WTC11 (cell line): ENCODE measurements at regions of chr20 and their contacts with region 1.

Region 1: DNA sequence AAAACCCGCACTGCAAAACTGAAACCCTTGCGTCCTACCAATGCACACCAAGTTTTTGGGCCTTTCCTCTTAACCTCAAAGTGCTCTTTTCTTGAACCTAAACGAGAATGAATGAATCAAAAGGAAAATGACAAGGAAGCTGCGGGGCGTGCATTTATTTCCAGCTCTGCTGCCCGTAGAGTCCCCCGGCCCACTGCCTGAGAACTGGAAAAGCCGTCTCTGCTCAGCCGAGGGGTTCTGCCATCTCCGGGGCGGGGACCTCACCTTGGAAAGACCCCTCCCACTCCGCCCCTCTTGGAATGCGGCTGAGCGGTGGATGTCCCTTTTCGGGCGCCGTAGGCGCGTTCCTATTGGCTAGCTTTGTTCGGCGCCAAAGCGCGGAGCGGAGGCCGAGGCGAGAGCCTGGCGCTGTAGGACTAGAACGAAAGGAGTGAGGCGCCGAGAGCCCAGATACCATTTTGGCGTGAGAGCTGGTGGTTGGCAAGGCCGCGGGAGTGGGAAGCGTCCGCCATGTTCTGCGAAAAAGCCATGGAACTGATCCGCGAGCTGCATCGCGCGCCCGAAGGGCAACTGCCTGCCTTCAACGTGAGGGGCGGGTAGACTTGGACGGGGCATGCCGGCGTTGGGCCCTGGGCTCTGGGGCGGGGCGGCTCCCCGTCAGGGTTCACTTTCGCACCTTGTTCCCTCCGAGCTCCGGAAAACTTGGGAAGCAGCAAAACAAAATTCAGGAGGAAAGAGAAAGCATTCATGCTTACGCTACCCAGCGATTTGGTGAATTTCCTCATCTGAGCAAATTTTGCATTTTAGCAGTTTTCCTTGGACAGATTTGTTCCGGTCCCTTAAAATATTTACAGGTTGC is at the start of gene GINS1:
- DNase-seq: peak; percentile 98
- ATAC-seq: peak; percentile 96
- H3K4me3 Mint-ChIP-seq: peak within 1 kb of the TSS; percentile 92
- H3K27ac Mint-ChIP-seq: peak within 1 kb of the TSS; percentile 94
- H3K4me1 Mint-ChIP-seq: peaks cover 18% of the 10 kb centered on the region
- H3K27me3 Mint-ChIP-seq: peaks cover 9% of the 10 kb centered on the region; the same call in 1 of the 2 replicates
- CTCF ChIP-seq: no peak
- total RNA-seq, gene GINS1: 69.8 to 71.6 TPM (median 70.4 TPM) in 3 replicates

Region 2: GRCh38 chr20:25294459-25295385 is 112.8 kb before region 1 on chr20:
- CTCF ChIA-PET with region 1: interaction called, 20 read pairs
- POLR2A ChIA-PET with region 1: interaction called, 3 read pairs
- DNase-seq: peak; percentile 85
- ATAC-seq: peak; percentile 83
- H3K4me3 Mint-ChIP-seq: no peak overlapping the region
- H3K27ac Mint-ChIP-seq: no peak overlapping the region
- H3K4me1 Mint-ChIP-seq: peaks cover 28% of the 10 kb centered on the region
- H3K27me3 Mint-ChIP-seq: no peaks in the 10 kb centered on the region
- CTCF ChIP-seq: peak; percentile 56

Region 3: GRCh38 chr20:25336561-25337422 is 70.7 kb before region 1 on chr20:
- CTCF ChIA-PET with region 1: interaction called, 10 read pairs
- POLR2A ChIA-PET with region 1: no interaction called
- DNase-seq: peak; percentile 53
- ATAC-seq: peak; percentile 87
- H3K4me3 Mint-ChIP-seq: no peak overlapping the region
- H3K27ac Mint-ChIP-seq: peak overlapping the region; percentile 72
- H3K4me1 Mint-ChIP-seq: peaks cover 32% of the 10 kb centered on the region
- H3K27me3 Mint-ChIP-seq: no peaks in the 10 kb centered on the region
- CTCF ChIP-seq: no peak

Region 4: DNA sequence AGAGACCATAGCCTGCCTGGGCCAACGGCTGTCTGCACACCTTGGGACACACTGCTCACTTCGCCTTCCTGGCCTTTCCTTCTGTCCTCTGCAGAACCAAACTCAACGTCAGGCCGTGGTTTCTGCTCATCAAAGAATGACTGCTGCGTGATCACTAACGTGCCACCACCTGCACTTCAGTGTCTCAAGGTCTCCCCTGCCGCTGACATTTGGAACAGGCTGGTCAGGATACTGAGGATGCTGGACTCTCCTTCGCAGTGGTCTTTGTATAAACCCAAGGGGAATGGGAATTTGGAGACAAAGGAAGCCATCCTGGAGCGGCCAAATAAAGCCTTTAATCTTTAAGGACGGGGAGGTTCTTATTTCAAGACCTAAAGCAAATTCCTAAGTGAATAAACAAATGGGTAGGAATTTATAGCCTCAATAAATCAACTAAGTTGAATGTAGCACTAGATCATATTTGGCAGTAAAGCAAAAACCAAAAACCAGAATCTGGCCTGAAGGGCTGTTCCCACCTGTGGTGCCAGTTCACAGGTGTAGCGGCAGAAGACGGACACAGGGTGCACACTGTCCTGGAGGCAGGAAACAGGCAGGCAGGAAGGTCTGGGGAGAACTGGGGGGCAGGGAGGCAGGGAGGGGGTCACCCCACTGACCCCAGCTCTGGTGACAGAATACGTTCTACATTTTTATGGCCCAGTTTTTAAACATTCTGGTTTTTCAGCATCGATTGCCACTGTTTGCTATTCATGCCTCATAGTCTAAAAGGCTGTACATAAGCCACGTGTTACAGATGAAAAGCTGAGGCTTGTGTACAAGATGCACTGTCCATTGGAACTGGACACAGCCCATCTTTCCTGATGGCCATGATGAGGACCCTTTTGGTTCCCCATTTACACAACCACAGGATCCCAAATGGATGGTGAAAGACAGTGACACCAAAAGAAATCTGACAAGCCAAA is 53.5 kb before region 1 on chr20:
- CTCF ChIA-PET with region 1: no interaction called
- POLR2A ChIA-PET with region 1: no interaction called
- DNase-seq: no peak
- ATAC-seq: no peak
- H3K4me3 Mint-ChIP-seq: peak overlapping the region; percentile 14
- H3K27ac Mint-ChIP-seq: peak overlapping the region; percentile 93
- H3K4me1 Mint-ChIP-seq: peaks cover 73% of the 10 kb centered on the region
- H3K27me3 Mint-ChIP-seq: no peaks in the 10 kb centered on the region
- CTCF ChIP-seq: no peak

Region 5: DNA sequence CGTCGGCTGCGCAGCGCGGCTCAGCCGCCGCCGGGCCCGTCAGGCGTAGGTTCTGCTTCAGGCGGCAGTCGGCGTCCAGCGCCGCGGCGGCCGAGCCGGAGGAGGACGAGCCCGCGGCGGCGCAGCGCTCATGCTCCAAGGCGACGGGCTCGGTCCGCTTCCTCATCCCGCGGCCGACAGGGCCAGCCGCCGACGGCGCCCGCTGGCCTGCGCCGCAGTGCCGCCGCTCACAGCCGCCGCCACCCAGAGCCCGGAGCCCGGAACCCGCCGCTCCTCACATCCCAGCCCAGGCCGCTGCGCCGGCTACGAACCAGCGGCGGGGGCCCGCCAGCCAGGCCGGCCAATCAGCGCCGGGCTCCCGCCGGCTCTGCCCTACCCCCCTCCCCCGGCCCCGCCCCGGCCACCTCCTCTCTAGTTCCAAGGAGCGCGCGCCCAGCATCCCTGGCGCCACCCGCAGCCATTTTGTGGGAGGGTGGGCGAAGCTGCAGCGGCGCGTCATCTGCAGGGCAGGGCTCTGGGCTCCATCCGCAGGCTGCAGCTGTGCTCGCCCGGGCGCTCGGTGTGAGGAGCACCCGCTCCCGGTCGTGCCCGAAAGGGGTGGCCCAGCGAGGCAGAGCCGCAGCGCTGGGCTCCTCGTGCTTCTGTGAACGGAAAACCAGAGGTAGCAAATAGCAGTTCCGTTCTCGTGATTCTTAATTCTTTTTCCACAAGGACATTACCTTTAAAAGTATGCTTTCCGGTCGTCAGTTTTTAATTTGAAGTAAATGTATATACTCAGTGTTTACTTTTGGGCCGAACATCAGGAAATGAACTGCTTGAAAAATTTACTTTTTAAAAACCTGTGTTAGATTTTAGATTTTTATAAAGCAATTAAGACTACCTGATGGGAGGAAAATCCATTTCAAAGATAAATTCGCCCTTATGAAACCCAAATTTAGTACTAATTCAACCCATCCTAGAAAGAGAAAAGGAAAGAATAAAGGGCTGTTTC is 16.7 kb before region 1 on chr20 and contains the start of gene ABHD12:
- CTCF ChIA-PET with region 1: interaction called, 8 read pairs
- POLR2A ChIA-PET with region 1: interaction called, 11 read pairs
- DNase-seq: peak; percentile 97
- ATAC-seq: peak; percentile 93
- H3K4me3 Mint-ChIP-seq: peak within 1 kb of the TSS; percentile 86
- H3K27ac Mint-ChIP-seq: peak within 1 kb of the TSS; percentile 95
- H3K4me1 Mint-ChIP-seq: peaks cover 12% of the 10 kb centered on the region
- H3K27me3 Mint-ChIP-seq: no peaks in the 10 kb centered on the region
- CTCF ChIP-seq: no peak
- total RNA-seq, gene ABHD12: 63.1 to 68.7 TPM (median 68.2 TPM) in 3 replicates

Region 6: DNA sequence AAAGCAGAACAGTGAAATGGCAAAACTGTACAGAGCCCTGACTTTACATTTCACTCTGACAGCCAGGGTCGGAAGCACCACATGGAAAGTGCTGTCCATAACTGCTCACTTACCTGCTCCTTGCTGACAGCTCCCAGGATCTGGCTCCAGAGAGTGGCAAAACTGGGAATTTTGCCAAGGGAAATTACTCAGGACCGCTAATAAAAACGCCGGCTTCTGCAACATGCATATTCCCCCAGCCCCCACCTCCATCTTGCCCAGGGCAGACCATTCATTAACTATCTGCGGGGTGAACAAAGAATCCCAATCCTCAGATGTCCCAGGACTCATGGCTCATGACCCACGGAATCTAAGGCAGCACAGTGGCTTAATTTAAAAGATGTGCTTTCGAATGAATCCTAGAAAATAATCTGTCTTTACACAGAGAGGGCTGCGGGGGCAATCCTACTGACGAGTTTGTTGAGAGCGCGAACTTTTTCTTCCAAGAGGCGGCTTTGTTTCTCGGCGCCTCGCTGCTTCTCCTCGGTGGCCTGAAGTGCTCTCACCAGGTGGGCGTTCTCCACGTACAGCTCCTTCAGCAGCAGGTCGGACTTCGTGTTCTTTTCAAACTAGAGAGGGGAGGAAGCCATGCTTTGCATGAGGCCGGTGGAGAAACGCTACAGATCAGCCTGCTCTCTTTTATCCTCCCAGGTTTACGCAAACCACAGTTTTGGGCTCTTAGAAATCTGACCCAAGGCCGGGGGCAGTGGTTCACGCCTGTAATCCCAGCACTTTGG is 45.7 kb after region 1 on chr20:
- CTCF ChIA-PET with region 1: no interaction called
- POLR2A ChIA-PET with region 1: interaction called, 11 read pairs
- DNase-seq: no peak
- ATAC-seq: no peak
- H3K4me3 Mint-ChIP-seq: no peak overlapping the region
- H3K27ac Mint-ChIP-seq: peak overlapping the region; percentile 37; the same call in 1 of the 2 replicates
- H3K4me1 Mint-ChIP-seq: no peaks in the 10 kb centered on the region
- H3K27me3 Mint-ChIP-seq: no peaks in the 10 kb centered on the region
- CTCF ChIP-seq: no peak